AG04450 (cell line): ENCODE measurements at regions of chr16 and their contacts with region 1.

Region 1: GRCh38 chr16:28277537-28278388 is 14.6 kb upstream of the SBK1 start:
- DNase-seq: peak; percentile 37
- H3K4me3 ChIP-seq: peak overlapping the region; percentile 60
- H3K27ac ChIP-seq: no peak overlapping the region
- H3K27me3 ChIP-seq: peaks cover 9% of the 10 kb centered on the region
- CTCF ChIP-seq: peak; percentile 91

Region 2: GRCh38 chr16:28289048-28289447 is 11.3 kb after region 1 on chr16:
- CTCF ChIA-PET with region 1: interaction called, 13 read pairs
- POLR2A ChIA-PET with region 1: no interaction called
- DNase-seq: no peak
- H3K4me3 ChIP-seq: no peak overlapping the region
- H3K27ac ChIP-seq: no peak overlapping the region
- H3K27me3 ChIP-seq: peaks cover 36% of the 10 kb centered on the region
- CTCF ChIP-seq: no peak

Region 3: GRCh38 chr16:28317040-28317880 is 39.5 kb after region 1 on chr16:
- CTCF ChIA-PET with region 1: interaction called, 77 read pairs
- POLR2A ChIA-PET with region 1: no interaction called
- DNase-seq: no peak
- H3K4me3 ChIP-seq: no peak overlapping the region
- H3K27ac ChIP-seq: no peak overlapping the region
- H3K27me3 ChIP-seq: no peaks in the 10 kb centered on the region
- CTCF ChIP-seq: peak; percentile 83